Ascending aorta (tissue), 2 donors: ENCODE measurements at regions of chr11 and their contacts with region 1.

Region 1: DNA sequence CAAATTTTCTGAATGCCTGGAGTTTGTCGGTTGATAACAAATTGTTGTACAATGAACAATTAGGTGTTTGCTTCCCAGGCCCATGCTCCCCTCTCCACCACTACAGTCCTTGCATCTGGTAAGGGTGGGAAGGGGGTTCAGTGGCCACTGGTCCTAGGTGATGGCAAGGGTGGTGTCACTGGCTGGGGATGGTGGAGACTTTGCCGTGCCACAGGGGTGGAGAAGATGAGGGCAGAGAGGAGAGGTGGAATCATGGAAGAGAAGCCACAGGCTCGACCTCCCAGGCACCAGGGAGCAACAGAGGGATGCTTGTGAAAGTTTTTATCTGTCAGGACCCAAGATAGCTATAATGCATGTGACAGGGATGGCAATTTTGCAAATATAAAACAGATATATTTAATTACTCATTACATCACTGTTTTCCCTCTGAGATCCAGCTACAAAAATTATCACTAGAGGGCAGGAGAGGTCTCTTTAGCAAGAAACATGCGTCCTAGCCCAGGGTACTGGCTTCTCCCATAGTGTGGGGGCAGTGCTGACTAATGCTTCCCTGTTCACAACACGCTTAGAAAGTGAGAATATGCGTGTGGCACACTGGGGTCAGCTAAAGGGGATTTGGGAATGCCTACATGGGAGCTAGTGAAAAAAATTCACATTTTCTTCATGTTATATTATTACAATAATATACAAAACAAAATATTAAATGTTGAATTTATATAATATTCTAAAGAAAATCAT is 49.0 kb upstream of the AMPD3 start:
- DNase-seq: peak in 1 of 2 donors; percentile 90
- H3K4me3 ChIP-seq: no peak overlapping the region
- H3K27ac ChIP-seq: no peak overlapping the region
- H3K4me1 ChIP-seq: peaks cover 0 to 6% of the 10 kb centered on the region in 2 donors
- H3K27me3 ChIP-seq: no peaks in the 10 kb centered on the region
- CTCF ChIP-seq: peak; percentile 71 to 84 (median 77)

Region 2: DNA sequence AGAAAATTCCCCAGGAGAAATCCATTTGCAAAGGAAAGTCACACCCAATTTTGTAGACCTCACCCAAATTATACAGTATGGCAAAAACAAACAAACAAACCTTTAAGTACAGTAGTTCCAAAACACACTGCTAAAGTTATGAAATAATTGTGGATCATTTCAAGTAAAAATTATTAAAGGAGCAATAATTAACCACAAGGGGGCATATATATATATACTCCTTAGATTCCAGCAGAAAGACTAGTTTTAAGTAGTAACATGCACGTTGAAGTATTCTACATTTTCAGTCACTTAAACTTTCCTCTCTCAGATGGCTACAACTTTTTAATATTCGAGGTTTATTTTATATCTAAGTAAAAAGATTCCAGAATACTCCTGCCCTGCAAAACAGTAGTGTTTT is 108.2 kb after region 1 on chr11:
- intact Hi-C with region 1: loop called (anchors 10 kb)
- DNase-seq: no peak
- H3K4me3 ChIP-seq: no peak overlapping the region
- H3K27ac ChIP-seq: peak overlapping the region; percentile 23 to 41
- H3K4me1 ChIP-seq: peaks cover 0 to 33% of the 10 kb centered on the region in 2 donors
- H3K27me3 ChIP-seq: no peaks in the 10 kb centered on the region
- CTCF ChIP-seq: peak; percentile 20 to 42 (median 29)

Region 3: GRCh38 chr11:10540923-10541560 is 135.0 kb after region 1 on chr11 and contains the start of gene RNF141:
- intact Hi-C with region 1: loop called (anchors 10 kb)
- DNase-seq: peak; percentile 79 to 97
- H3K4me3 ChIP-seq: peak within 1 kb of the TSS; percentile 63 to 88
- H3K27ac ChIP-seq: peak within 1 kb of the TSS; percentile 93 to 94
- H3K4me1 ChIP-seq: peaks cover 0 to 32% of the 10 kb centered on the region in 2 donors
- H3K27me3 ChIP-seq: no peaks in the 10 kb centered on the region
- CTCF ChIP-seq: peak; percentile 85 to 95 (median 91)
- total RNA-seq, gene RNF141: 10.9 TPM

Region 4: DNA sequence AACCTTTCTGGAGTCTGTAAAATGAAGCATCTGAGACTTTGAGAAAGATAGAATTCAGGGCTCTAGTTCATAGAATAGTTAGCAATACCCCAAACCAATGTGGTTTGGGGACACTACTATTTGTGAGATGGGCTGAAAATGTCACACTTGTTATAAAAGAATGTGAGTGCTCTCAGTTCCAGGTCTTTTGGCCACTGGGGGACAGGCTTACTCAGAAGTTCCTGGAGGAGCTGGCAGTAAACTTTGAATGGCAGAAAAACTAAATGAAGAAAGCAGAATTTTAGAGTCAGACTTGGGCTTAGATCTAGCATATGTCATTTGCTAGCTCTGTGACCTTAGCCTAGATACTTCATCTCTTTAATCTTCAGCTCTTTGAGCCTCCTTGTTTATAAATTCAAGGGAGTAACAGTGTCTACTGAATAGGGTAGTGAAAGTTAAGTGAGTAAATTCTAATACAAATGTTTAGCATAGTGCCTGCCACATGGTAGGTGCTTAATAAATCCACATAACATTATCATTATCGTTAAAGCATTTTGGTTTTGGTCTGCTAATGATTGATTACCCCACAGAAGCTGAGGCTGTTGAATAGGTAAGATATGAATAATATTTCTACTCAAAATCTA is 158.8 kb after region 1 on chr11:
- intact Hi-C with region 1: loop called (anchors 5 kb)
- DNase-seq: no peak
- H3K4me3 ChIP-seq: peak overlapping the region in 1 of 2 donors; percentile 10
- H3K27ac ChIP-seq: peak overlapping the region; percentile 78 to 82
- H3K4me1 ChIP-seq: peaks cover 0 to 28% of the 10 kb centered on the region in 2 donors
- H3K27me3 ChIP-seq: no peaks in the 10 kb centered on the region
- CTCF ChIP-seq: peak; percentile 44 to 60 (median 46)

Region 5: GRCh38 chr11:10623797-10624761 is 218.1 kb after region 1 on chr11:
- intact Hi-C with region 1: loop called (anchors 5 kb)
- DNase-seq: peak in 1 of 2 donors; percentile 85
- H3K4me3 ChIP-seq: no peak overlapping the region
- H3K27ac ChIP-seq: peak overlapping the region; percentile 82 to 97
- H3K4me1 ChIP-seq: peaks cover 32 to 46% of the 10 kb centered on the region in 2 donors
- H3K27me3 ChIP-seq: no peaks in the 10 kb centered on the region
- CTCF ChIP-seq: peak; percentile 39 to 46 (median 40)

Region 6: GRCh38 chr11:10735481-10736475 is 329.8 kb after region 1 on chr11:
- intact Hi-C with region 1: loop called (anchors 1 kb)
- DNase-seq: peak; percentile 81 to 98
- H3K4me3 ChIP-seq: peak overlapping the region; percentile 29 to 44
- H3K27ac ChIP-seq: peak overlapping the region; percentile 75 to 84
- H3K4me1 ChIP-seq: peaks cover 0 to 25% of the 10 kb centered on the region in 2 donors
- H3K27me3 ChIP-seq: no peaks in the 10 kb centered on the region
- CTCF ChIP-seq: peak; percentile 99